HCT116 (cell line): ENCODE measurements at regions of chr12 and their contacts with region 1.

Region 1: DNA sequence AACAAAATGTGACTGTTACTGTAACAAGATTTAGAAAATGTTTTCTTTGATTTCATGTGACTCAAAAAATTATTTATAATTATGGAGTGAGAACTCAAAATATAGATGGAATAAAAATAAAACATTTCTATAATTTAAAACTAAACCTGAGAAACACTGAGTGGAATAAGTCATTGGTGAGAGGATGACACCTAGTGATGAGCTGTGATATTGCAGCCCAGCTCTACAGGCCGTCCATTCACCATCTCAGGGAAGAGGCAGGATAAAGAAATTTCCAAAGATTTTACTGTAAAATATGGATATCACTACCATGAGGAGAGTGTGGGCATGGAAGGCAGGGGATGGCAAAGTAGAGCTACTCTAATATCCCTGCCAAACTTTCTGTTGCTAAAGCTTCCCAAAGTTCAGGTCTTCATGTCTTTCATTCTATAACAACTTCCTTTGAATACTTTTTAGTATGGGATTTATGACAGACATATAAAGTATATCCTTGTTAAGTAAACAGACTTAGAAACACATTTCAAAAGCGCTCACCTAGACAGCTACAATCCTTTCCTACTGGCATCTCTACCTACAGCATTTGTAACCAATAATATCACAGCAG is 308.0 kb downstream of the ITPR2 start:
- DNase-seq: peak; percentile 23
- ATAC-seq: no peak
- H3K4me3 ChIP-seq: no peak overlapping the region
- H3K27ac ChIP-seq: no peak overlapping the region
- H3K4me1 ChIP-seq: no peaks in the 10 kb centered on the region
- H3K27me3 ChIP-seq: no peaks in the 10 kb centered on the region
- CTCF ChIP-seq: peak; percentile 35 to 72 (median 72); a peak in 5 of 6 replicates
- POLR2A ChIP-seq: no peak
- RAD21 ChIP-seq: peak; percentile 55; the same call in 1 of the 2 replicates

Region 2: DNA sequence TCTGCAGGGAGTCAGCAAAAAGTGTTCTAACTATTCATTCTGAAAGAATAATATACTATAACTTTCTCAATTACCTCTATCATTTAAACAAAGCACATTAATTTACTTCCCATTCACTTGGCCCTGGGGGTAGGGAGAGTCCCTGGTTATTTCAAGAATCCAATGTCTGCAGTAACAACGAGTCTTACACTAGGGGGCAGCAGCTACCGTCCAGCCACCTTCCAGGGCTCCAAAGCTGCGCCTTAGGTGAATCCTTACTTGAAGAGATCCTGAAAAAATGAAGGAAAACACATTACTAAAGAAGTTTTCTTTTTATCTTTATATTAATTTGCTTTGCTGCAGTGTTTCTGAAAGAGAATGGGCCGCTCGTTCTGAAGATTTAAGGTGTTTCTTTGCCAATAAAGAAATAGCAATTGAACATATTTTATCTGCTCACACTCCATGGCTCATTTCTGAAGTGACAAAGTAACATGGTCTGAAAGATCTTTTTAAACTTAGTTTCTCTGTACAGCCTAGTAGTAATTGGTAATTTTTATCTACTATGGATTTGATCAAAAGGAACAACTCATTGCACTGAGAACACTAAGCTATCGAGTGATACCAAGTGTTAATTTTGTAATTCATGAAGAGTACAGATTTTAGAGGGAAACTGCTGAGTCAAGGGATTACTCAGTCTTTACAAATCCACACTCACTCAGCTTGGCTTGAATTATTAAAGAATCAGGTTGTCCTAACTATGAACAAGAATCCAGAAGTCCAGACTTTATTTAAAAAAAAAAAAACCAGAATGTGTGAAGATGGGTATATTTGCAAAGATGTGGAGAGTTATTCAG is 427.7 kb before region 1 on chr12:
- CTCF ChIA-PET with region 1: interaction called, 5 read pairs
- POLR2A ChIA-PET with region 1: no interaction called
- RAD21 ChIA-PET with region 1: no interaction called
- intact Hi-C with region 1: loop called (anchors 1 kb)
- DNase-seq: peak; percentile 53
- ATAC-seq: peak; percentile 99
- H3K4me3 ChIP-seq: no peak overlapping the region
- H3K27ac ChIP-seq: no peak overlapping the region
- H3K4me1 ChIP-seq: peaks cover 9 to 12% of the 10 kb centered on the region in 2 experiments; a peak in 3 of 4 replicates
- H3K27me3 ChIP-seq: no peaks in the 10 kb centered on the region
- CTCF ChIP-seq: peak; percentile 79 to 94 (median 87)
- POLR2A ChIP-seq: no peak
- RAD21 ChIP-seq: peak; percentile 92